ENCODE measurements at regions of chr12 and their contacts with region 1.

Region 1: GRCh38 chr12:52171950-52172512 is 19.8 kb downstream of the KRT80 start:
- DNase-seq: peak in 1 of 9 experiments; percentile 20
- ATAC-seq: no peak
- H3K4me3 ChIP-seq: no peak overlapping the region
- H3K4me3 Mint-ChIP-seq: no peak overlapping the region
- H3K27ac ChIP-seq: no peak overlapping the region
- H3K27ac Mint-ChIP-seq: no peak overlapping the region
- H3K4me1 ChIP-seq: no peaks in the 10 kb centered on the region
- H3K4me1 Mint-ChIP-seq: no peaks in the 10 kb centered on the region
- H3K27me3 ChIP-seq: no peaks in the 10 kb centered on the region
- H3K27me3 Mint-ChIP-seq: no peaks in the 10 kb centered on the region
- CTCF ChIP-seq: no peak

Region 2: GRCh38 chr12:51984657-51985056 is 187.4 kb before region 1 on chr12:
- CTCF ChIA-PET with region 1: no interaction called
- POLR2A ChIA-PET with region 1: no interaction called
- intact Hi-C with region 1: no loop called
- DNase-seq: no peak
- ATAC-seq: no peak
- H3K4me3 ChIP-seq: no peak overlapping the region
- H3K4me3 Mint-ChIP-seq: no peak overlapping the region
- H3K27ac ChIP-seq: no peak overlapping the region
- H3K27ac Mint-ChIP-seq: no peak overlapping the region
- H3K4me1 ChIP-seq: no peaks in the 10 kb centered on the region
- H3K4me1 Mint-ChIP-seq: peaks cover 10% of the 10 kb centered on the region
- H3K27me3 ChIP-seq: no peaks in the 10 kb centered on the region
- H3K27me3 Mint-ChIP-seq: no peaks in the 10 kb centered on the region
- CTCF ChIP-seq: no peak

Region 3: DNA sequence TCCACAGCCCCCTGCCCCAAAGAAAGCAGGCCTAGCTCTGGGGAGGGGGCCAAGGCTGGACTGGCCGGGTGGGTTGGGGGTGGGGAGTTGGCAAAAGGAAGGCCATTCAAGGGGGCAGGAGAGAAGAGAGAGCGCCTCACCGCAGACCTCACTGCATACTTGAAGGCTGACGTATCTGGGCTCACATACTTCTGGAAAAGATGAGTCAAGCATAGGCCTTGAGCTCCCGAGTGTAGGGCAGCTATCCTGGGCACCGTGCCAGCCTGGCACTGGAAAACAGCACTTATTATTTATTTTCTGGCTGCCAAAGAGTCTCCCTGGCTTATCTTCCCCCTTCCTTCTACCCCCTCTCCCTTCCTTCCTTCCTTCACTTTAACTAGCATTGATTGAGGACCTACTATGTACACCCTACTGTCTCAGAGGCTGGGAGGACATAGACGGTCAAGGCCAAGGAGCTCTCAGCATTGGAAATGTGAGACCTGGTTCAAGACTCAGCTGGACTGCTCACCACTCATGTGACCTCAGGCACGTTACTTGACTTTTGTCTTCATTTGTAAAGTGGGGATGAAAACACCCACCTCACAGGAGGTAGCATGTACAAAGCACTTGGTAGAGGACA is 20.3 kb after region 1 on chr12:
- CTCF ChIA-PET with region 1: no interaction called
- POLR2A ChIA-PET with region 1: no interaction called
- intact Hi-C with region 1: loop called in 1 of 2 experiments (anchors 1 kb)
- DNase-seq: peak in 1 of 9 experiments; percentile 13
- ATAC-seq: no peak
- H3K4me3 ChIP-seq: no peak overlapping the region
- H3K4me3 Mint-ChIP-seq: no peak overlapping the region
- H3K27ac ChIP-seq: no peak overlapping the region
- H3K27ac Mint-ChIP-seq: no peak overlapping the region
- H3K4me1 ChIP-seq: no peaks in the 10 kb centered on the region
- H3K4me1 Mint-ChIP-seq: no peaks in the 10 kb centered on the region
- H3K27me3 ChIP-seq: no peaks in the 10 kb centered on the region
- H3K27me3 Mint-ChIP-seq: peaks cover 14% of the 10 kb centered on the region
- CTCF ChIP-seq: no peak

Measured in CD8-positive, alpha-beta T cell (primary cell).